HCT116 (cell line): ENCODE measurements at regions of chr16 and their contacts with region 1.

Region 1: DNA sequence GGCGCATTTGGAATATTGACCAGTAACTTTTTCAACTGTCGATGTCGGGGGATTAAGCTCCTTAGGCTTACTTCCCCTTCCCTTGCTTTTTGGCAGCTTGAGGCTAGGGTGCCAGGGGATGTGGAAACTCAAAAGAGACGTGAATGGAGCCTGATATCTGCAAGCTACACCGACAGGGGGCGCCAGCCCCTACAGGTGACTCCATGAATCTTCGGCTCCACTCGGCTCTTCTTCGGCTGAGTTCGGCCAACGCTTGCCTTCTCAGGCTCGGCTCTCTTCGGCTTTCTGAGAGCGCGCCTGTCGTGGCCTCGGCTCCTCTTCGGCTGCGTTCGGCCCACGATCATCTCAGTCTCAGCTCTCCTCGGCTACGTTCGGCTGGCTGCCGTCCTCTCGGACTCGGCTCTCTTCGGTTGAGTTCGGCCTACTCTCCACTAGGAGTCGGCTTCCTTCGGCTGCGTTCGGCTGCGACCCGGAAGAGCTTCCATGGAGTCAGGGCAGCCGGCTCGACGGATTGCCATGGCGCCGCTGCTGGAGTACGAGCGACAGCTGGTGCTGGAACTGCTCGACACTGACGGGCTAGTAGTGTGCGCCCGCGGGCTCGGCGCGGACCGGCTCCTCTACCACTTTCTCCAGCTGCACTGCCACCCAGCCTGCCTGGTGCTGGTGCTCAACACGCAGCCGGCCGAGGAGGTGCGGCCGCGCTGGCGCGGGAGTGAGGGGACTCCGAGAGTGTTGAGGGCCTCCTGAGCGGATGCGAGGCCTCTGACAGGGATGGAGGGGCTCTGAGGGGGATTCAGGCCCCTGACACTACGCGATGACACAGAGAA is at the start of gene ERCC4:
- DNase-seq: peak; percentile 98
- ATAC-seq: peak; percentile 98
- H3K4me3 ChIP-seq: peak within 1 kb of the TSS; percentile 91 to 98
- H3K27ac ChIP-seq: peak within 1 kb of the TSS; percentile 65
- H3K4me1 ChIP-seq: peaks cover 7 to 15% of the 10 kb centered on the region in 2 experiments
- H3K27me3 ChIP-seq: no peaks in the 10 kb centered on the region
- CTCF ChIP-seq: peak; percentile 80 to 96 (median 84)
- POLR2A ChIP-seq: peak; percentile 39
- RAD21 ChIP-seq: peak; percentile 60
- total RNA-seq, gene ERCC4: 10.4 TPM

Region 2: GRCh38 chr16:13896543-13897183 is 23.2 kb before region 1 on chr16:
- CTCF ChIA-PET with region 1: interaction called, 16 read pairs
- POLR2A ChIA-PET with region 1: no interaction called
- RAD21 ChIA-PET with region 1: no interaction called
- intact Hi-C with region 1: no loop called
- DNase-seq: peak; percentile 36
- ATAC-seq: peak; percentile 90
- H3K4me3 ChIP-seq: no peak overlapping the region
- H3K27ac ChIP-seq: no peak overlapping the region
- H3K4me1 ChIP-seq: no peaks in the 10 kb centered on the region
- H3K27me3 ChIP-seq: peaks cover 38% of the 10 kb centered on the region
- CTCF ChIP-seq: peak; percentile 54 to 86 (median 82); a peak in 5 of 6 replicates
- POLR2A ChIP-seq: no peak
- RAD21 ChIP-seq: peak; percentile 55

Region 3: GRCh38 chr16:13935408-13935807 is 15.5 kb after region 1 on chr16:
- CTCF ChIA-PET with region 1: interaction called, 14 read pairs
- POLR2A ChIA-PET with region 1: no interaction called
- RAD21 ChIA-PET with region 1: no interaction called
- intact Hi-C with region 1: no loop called
- DNase-seq: no peak
- ATAC-seq: 0 out of 2 replicates have a peak, but pooled peaks have one; percentile 46
- H3K4me3 ChIP-seq: no peak overlapping the region
- H3K27ac ChIP-seq: no peak overlapping the region
- H3K4me1 ChIP-seq: peaks cover 0 to 6% of the 10 kb centered on the region in 2 experiments; a peak in 3 of 4 replicates
- H3K27me3 ChIP-seq: no peaks in the 10 kb centered on the region
- CTCF ChIP-seq: peak in 2 of 3 experiments; percentile 80 to 83; a peak in 4 of 6 replicates
- POLR2A ChIP-seq: no peak
- RAD21 ChIP-seq: no peak

Region 4: DNA sequence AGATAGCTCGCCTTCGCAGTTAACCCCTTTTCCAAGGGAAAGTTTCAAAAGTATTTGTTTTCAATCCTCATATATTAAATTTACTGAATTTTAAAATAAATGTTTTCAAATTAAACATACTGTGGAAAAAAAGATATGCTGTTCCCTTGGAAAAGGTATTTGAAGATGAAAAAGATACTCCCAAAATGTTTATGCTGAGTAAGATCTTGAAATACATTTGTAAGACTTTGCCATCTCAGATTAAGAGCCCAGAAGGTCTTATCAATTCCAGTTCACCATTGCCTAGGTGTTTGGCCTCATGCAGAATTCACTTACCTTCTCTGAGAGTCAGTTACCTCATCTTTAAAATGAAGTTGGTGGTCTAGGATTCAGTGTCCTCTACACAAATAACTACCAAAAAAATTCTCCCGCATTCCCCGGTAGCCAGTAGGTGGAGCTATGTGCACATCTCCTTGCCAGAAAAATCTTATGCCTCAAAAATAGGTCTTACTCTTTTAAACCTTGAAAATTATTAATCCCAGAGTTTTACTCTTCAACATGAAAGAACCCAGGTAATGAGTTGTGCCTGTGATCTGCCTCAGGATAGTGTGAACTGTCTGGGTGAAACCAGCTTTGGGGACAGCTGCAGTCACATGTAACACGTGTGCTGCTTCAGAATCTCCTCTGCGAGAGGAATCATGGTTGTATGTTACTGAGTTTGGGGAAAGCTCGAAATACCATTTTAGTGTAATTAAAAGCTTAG is 329.6 kb after region 1 on chr16:
- CTCF ChIA-PET with region 1: interaction called, 13 read pairs
- POLR2A ChIA-PET with region 1: no interaction called
- RAD21 ChIA-PET with region 1: no interaction called
- intact Hi-C with region 1: loop called (anchors 5 kb)
- DNase-seq: peak; percentile 12
- ATAC-seq: peak; percentile 63
- H3K4me3 ChIP-seq: no peak overlapping the region
- H3K27ac ChIP-seq: no peak overlapping the region
- H3K4me1 ChIP-seq: no peaks in the 10 kb centered on the region
- H3K27me3 ChIP-seq: no peaks in the 10 kb centered on the region
- CTCF ChIP-seq: peak; percentile 48 to 98 (median 88); a peak in 5 of 6 replicates
- POLR2A ChIP-seq: no peak
- RAD21 ChIP-seq: peak; percentile 74

Region 5: DNA sequence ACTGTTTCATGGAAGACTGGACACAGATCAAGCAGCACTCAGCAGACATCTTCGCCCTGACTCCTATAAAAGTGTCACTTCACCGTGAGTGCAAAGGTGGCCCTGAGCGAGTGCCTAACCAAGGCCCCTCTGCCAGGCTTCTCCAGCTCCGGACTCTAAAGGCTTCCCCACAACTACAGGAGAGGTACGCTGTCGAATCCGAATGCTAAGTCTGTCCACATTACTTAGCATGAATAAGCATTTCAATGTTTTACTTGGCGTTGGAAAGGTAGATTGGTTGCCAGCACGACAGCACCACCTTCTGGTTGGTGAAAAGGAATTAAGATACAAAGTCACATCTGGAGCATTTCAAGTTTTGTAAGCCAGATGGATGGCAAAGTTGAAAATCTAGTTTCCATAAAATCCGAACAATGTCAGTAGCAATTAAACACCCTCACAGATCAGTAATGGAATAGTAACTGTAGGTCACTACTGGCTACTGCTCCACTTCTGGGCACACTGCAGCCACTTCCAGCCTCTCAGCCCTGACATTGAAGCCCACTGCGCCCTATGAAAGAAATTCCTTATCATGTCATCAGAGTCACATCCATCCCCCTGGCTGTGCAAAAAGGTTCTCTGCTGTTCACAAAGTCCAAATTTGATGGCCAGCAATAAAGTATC is 609.2 kb after region 1 on chr16:
- CTCF ChIA-PET with region 1: interaction called, 5 read pairs
- POLR2A ChIA-PET with region 1: no interaction called
- RAD21 ChIA-PET with region 1: no interaction called
- intact Hi-C with region 1: loop called (anchors 1 kb)
- DNase-seq: peak; percentile 66
- ATAC-seq: peak; percentile 86
- H3K4me3 ChIP-seq: no peak overlapping the region
- H3K27ac ChIP-seq: peak overlapping the region; percentile 41; the same call in 1 of the 2 replicates
- H3K4me1 ChIP-seq: peaks cover 6 to 13% of the 10 kb centered on the region in 2 experiments; a peak in 3 of 4 replicates
- H3K27me3 ChIP-seq: no peaks in the 10 kb centered on the region
- CTCF ChIP-seq: peak; percentile 67 to 85 (median 81)
- POLR2A ChIP-seq: no peak
- RAD21 ChIP-seq: peak; percentile 99